ENCODE measurements at regions of chr19 and their contacts with region 1.

Region 1: GRCh38 chr19:17996826-17997316 is 11.1 kb upstream of the ARRDC2 start:
- DNase-seq: peak; percentile 80 to 83
- H3K4me3 ChIP-seq: no peak overlapping the region
- H3K27ac ChIP-seq: no peak overlapping the region
- H3K4me1 ChIP-seq: peaks cover 4 to 9% of the 10 kb centered on the region in 2 donors
- H3K27me3 ChIP-seq: no peaks in the 10 kb centered on the region
- CTCF ChIP-seq: peak; percentile 94 to 99 (median 96)
- POLR2A ChIP-seq: no peak

Region 2: GRCh38 chr19:17943274-17944221 is 53.3 kb before region 1 on chr19:
- intact Hi-C with region 1: loop called (anchors 2 kb)
- DNase-seq: no peak
- H3K4me3 ChIP-seq: no peak overlapping the region
- H3K27ac ChIP-seq: no peak overlapping the region
- H3K4me1 ChIP-seq: peaks cover 4 to 7% of the 10 kb centered on the region in 2 donors
- H3K27me3 ChIP-seq: no peaks in the 10 kb centered on the region
- CTCF ChIP-seq: no peak
- POLR2A ChIP-seq: no peak

Measured in thyroid gland (tissue), 4 donors.